ENCODE measurements at regions of chr2 and their contacts with region 1.

Region 1: DNA sequence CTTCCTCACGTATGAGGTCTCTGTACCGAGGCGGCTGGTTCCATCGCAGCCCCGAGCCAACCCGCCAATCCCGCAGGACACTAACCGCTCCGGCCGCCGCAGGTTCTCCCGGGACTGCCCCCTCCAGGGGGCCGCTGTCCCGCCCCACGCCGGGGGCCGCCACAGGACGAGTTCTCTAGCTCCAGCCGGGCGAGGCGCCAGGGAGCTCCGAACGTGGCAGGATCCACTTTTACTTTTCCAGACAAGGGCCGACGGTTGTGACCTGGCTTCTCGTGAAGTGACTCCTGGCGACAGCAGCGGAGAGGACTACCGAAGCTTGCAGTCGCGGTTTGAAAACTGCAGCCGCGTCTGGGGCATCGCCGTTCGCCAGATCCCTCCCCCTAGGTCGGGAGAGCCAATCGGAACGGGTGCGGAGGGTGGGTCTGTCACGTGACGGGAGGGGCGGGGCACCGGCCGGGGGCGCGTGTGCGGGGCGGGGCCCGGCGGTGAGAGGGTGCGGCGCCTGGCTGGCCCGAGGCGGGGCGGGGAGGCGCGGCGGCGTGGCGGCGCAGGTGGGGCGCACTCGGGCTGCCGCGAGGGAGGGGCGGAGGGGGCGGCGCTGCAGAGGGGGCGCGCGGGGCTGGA is at the start of gene STK17B:
- DNase-seq: peak; percentile 89 to 99 (median 96)
- ATAC-seq: peak; percentile 56 to 57
- H3K4me3 Mint-ChIP-seq: peak within 1 kb of the TSS; percentile 93 to 99 (median 96)
- H3K27ac Mint-ChIP-seq: peak within 1 kb of the TSS; percentile 94 to 99 (median 96)
- H3K4me1 Mint-ChIP-seq: peaks cover 26 to 51% (median 35%) of the 10 kb centered on the region in 4 donors
- H3K27me3 Mint-ChIP-seq: no peaks in the 10 kb centered on the region
- polyA plus RNA-seq, gene STK17B: 73.5 to 98.3 (median 91.9) TPM

Region 2: DNA sequence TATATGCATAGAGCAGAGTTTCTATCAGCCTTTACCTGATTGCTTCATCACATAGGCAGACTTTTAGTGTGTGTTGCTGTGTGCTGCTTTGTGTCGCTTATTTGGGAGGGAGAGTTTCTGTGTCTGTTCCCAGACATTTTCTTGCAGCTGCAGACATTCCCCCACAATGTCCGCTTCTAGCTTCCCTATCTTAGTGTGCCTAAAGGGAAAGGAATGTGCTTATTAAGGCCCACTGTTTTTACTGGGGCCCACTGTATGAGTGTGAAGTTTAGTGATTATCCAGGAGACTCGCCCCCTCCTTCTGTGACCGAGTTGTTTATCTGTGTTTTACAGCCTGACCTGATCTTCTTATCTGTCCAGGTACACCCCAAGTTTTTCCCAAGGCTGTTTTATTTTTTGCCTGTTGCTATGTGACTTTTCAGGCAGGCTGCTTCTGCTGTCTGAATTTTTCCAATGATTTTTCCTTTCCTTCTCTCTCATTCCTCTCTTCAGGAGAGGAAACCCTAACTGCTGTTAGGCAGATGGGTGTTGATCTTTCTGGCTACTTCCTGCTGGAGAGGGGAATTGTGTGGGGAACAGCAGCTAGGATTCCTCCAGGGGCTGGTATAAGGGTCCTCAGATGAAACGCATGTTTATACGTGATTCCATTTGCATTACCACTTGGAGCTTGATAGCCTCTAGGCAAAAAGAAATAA is 47.5 kb before region 1 on chr2:
- POLR2A ChIA-PET with region 1: no interaction called
- DNase-seq: no peak
- ATAC-seq: no peak
- H3K4me3 Mint-ChIP-seq: no peak overlapping the region
- H3K27ac Mint-ChIP-seq: no peak overlapping the region
- H3K4me1 Mint-ChIP-seq: peaks cover 0 to 2% (median 0%) of the 10 kb centered on the region in 4 donors
- H3K27me3 Mint-ChIP-seq: no peaks in the 10 kb centered on the region

Region 3: GRCh38 chr2:196136151-196136550 is 35.2 kb before region 1 on chr2:
- POLR2A ChIA-PET with region 1: interaction called, 36 read pairs
- DNase-seq: peak in 1 of 10 donors; percentile 17
- ATAC-seq: peak; percentile 6 to 28
- H3K4me3 Mint-ChIP-seq: peak overlapping the region in 3 of 10 donors; percentile 14 to 56 (median 28)
- H3K27ac Mint-ChIP-seq: peak overlapping the region in 9 of 10 donors; percentile 17 to 78 (median 36)
- H3K4me1 Mint-ChIP-seq: peaks cover 9 to 62% (median 45%) of the 10 kb centered on the region in 4 donors
- H3K27me3 Mint-ChIP-seq: no peaks in the 10 kb centered on the region

Region 4: DNA sequence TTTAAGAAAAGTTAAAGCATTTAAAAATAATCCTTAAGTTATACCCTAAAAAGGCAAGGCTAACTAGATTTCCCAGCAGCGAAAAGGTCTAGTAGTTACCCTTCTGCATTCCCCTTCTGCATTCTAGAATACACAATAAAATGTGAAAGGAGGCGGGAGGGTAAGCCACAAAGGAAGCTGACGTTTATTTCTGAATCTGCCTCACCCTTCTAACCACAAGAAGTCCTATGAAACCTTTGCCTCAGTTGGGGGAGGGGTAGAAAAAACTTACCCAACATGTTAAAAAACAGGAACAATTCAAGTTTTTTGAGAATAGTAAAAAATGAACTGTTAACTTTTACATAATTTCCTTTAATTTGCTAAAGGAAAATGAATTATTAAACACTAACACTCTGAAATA is 11.3 kb before region 1 on chr2:
- POLR2A ChIA-PET with region 1: interaction called, 83 read pairs
- DNase-seq: peak in 9 of 10 donors; percentile 60 to 92 (median 84)
- ATAC-seq: peak; percentile 44 to 65
- H3K4me3 Mint-ChIP-seq: peak overlapping the region; percentile 63 to 96 (median 84)
- H3K27ac Mint-ChIP-seq: peak overlapping the region; percentile 89 to 100 (median 97)
- H3K4me1 Mint-ChIP-seq: peaks cover 13 to 90% (median 62%) of the 10 kb centered on the region in 4 donors
- H3K27me3 Mint-ChIP-seq: no peaks in the 10 kb centered on the region

Region 5: DNA sequence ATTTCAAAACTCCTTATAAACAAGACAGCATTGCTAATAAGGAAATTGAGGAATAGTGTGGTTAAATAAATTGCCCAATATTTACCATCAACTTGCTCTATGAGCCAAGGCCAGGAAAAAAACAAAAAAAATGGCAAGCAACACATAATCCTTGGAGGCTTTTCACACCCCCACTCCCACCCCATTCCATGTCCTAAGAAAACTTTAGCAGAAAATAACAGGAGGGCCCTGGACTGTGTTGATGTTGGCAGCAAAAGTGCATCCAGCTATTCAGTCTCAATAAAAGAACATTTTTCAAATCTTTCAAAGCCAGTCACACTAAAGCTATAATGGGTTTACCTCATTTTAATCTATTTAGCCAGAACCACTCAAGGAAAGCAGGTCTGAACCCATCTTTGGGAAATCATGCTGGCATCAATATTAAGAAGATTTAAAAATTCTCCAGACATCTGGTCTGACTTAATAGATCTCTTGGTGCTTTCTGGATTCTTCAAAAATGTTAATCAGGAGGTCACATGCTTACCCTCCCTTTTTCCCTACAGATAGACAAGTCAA is 34.6 kb after region 1 on chr2:
- POLR2A ChIA-PET with region 1: interaction called, 193 read pairs
- DNase-seq: no peak
- ATAC-seq: no peak
- H3K4me3 Mint-ChIP-seq: no peak overlapping the region
- H3K27ac Mint-ChIP-seq: peak overlapping the region in 5 of 10 donors; percentile 26 to 64 (median 33)
- H3K4me1 Mint-ChIP-seq: peaks cover 23 to 62% (median 51%) of the 10 kb centered on the region in 4 donors
- H3K27me3 Mint-ChIP-seq: no peaks in the 10 kb centered on the region

Region 6: GRCh38 chr2:196233021-196233804 is 61.9 kb after region 1 on chr2:
- POLR2A ChIA-PET with region 1: interaction called, 42 read pairs
- DNase-seq: no peak
- ATAC-seq: peak in 1 of 2 donors; percentile 10
- H3K4me3 Mint-ChIP-seq: peak overlapping the region in 6 of 10 donors; percentile 4 to 59 (median 43)
- H3K27ac Mint-ChIP-seq: peak overlapping the region; percentile 87 to 100 (median 96)
- H3K4me1 Mint-ChIP-seq: peaks cover 26 to 93% (median 86%) of the 10 kb centered on the region in 4 donors
- H3K27me3 Mint-ChIP-seq: no peaks in the 10 kb centered on the region

Region 7: DNA sequence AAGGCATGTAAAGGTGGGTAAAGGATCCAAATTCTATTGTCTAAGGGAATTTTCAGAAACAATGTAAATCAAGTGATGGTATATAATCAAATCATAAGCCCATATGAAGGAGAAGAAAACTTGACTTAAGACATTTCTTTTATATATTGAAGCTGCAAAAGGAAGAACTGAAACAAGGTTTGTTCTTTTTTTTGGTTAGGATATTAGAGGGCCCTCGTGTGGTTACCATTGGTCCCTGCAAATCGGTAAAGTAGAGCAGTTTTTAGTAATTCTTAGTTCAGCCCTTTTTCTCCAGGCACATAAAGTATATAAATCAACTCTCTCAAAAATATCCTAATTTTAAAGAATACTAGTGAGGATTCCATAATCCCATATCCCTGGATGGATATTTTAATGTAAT is 105.6 kb after region 1 on chr2:
- POLR2A ChIA-PET with region 1: interaction called, 18 read pairs
- DNase-seq: peak in 9 of 10 donors; percentile 12 to 74 (median 51)
- ATAC-seq: peak; percentile 13 to 53
- H3K4me3 Mint-ChIP-seq: peak overlapping the region in 5 of 10 donors; percentile 1 to 79 (median 59)
- H3K27ac Mint-ChIP-seq: peak overlapping the region; percentile 24 to 96 (median 91)
- H3K4me1 Mint-ChIP-seq: peaks cover 27 to 51% (median 40%) of the 10 kb centered on the region in 4 donors
- H3K27me3 Mint-ChIP-seq: no peaks in the 10 kb centered on the region